ENCODE measurements at regions of chr7 and their contacts with region 1.

Region 1: DNA sequence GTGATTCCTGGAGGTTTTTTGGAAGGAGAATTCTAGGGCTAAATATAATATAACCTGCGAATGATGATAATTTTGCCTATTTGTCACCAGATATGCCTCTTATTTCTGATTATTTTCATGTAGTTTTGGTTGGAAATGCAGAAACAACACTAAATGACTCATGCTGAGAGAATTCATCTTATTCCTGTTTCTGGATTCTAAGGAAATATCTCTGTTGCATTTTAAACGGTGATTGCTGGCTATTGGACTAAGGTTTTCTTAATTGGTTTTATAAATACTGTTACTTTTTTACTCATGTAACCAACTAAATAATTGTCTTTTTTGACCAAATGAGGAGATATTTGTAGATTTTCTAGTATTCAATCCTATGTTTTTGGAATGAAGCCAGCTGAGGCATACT is 204.9 kb upstream of the NPSR1 start:
- DNase-seq: no peak
- ATAC-seq: no peak
- H3K4me3 ChIP-seq: no peak overlapping the region
- H3K27ac ChIP-seq: no peak overlapping the region
- H3K4me1 ChIP-seq: no peaks in the 10 kb centered on the region
- H3K27me3 ChIP-seq: no peaks in the 10 kb centered on the region
- CTCF ChIP-seq: no peak

Region 2: GRCh38 chr7:34406848-34407530 is 46.2 kb before region 1 on chr7:
- CTCF ChIA-PET with region 1: no interaction called
- POLR2A ChIA-PET with region 1: no interaction called
- in situ Hi-C with region 1: no loop called
- intact Hi-C with region 1: loop called (anchors 10 kb)
- DNase-seq: no peak
- ATAC-seq: no peak
- H3K4me3 ChIP-seq: no peak overlapping the region
- H3K27ac ChIP-seq: no peak overlapping the region
- H3K4me1 ChIP-seq: no peaks in the 10 kb centered on the region
- H3K27me3 ChIP-seq: no peaks in the 10 kb centered on the region
- CTCF ChIP-seq: no peak

Measured in Panc1 (cell line).